ENCODE measurements at regions of chr15 and their contacts with region 1.

Region 1: GRCh38 chr15:67839929-67840748 is at the start of gene RNU6-1:
- DNase-seq: peak; percentile 92 to 94
- H3K4me3 ChIP-seq: peak within 1 kb of the TSS; percentile 81 to 89 (median 86)
- H3K27ac ChIP-seq: peak within 1 kb of the TSS; percentile 92 to 99
- H3K4me1 ChIP-seq: peaks cover 0 to 10% of the 10 kb centered on the region in 2 donors
- H3K27me3 ChIP-seq: peaks cover 2 to 11% of the 10 kb centered on the region in 2 donors
- CTCF ChIP-seq: no peak
- POLR2A ChIP-seq: peak; percentile 85
- total RNA-seq, gene RNU6-1: not detected

Region 2: DNA sequence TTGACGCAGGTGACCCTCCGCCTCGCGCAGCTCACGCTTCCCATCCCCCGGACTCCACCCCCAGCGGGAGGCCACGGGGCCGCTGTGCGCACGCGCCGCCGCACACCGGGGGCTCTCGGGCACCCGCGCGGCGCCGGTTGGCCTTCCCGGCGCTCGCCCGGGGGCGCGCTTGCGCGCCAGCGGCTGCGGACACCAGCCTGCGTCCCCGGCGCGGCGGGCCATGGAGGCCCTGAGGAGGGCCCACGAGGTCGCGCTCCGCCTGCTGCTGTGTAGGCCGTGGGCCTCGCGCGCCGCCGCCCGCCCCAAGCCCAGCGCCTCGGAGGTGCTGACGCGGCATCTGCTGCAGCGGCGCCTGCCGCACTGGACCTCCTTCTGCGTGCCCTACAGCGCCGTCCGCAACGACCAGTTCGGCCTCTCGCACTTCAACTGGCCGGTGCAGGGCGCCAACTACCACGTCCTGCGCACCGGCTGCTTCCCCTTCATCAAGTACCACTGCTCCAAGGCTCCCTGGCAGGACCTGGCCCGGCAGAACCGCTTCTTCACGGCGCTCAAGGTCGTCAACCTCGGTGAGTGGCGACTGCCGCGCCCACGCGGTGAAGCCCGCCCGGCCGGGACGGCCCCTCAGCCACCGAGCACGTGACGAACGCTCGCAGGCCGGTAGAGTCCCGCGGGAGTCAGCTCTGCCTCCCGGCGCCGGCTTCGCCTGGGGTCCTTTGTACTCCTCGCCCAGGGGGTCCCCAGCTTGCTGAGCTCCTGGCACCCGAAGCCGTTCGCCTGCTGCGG is 318.9 kb before region 1 on chr15 and contains the start of gene C15orf61:
- intact Hi-C with region 1: loop called (anchors 10 kb)
- DNase-seq: peak; percentile 90 to 91
- H3K4me3 ChIP-seq: peak within 1 kb of the TSS; percentile 77 to 97 (median 86)
- H3K27ac ChIP-seq: peak within 1 kb of the TSS; percentile 95 to 98
- H3K4me1 ChIP-seq: peaks cover 0 to 10% of the 10 kb centered on the region in 2 donors
- H3K27me3 ChIP-seq: no peaks in the 10 kb centered on the region
- CTCF ChIP-seq: no peak
- POLR2A ChIP-seq: peak; percentile 33
- total RNA-seq, gene C15orf61: 3.8 to 24.3 (median 4.6) TPM

Region 3: DNA sequence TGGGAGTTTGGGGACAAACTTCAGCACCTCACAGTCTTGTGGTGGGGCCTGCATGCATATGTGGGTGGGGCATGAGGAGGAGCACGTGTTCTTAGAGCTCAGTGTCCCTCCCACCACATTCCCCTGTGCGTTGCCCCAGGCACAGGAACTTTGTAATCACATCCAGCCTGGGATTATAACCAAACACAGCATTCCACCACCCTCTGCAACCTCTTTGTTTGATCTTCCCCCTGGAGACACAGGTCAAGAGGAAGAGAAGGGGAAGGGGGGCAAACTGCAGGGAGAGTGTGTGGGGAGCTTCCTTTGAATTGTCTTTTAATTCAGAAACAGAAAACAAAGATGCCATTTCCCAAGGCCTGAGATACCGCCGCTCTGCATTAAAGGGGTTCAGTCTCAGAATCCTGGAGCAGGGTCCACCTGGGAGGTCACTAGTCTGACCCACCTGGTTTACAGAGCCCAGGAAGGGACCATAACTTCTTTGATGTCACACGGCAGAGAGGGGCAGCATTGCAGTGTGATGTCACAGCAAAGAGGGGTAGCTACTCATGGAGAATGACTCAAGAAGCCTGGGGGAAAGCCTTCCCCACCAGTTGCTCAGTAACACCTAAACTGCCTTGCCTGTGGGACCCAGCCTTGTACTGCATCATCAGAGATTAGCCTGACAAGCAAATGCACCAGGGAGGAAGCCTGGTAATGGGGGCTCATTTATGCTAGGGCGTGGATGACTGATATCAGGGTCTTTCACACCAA is 106.0 kb after region 1 on chr15:
- intact Hi-C with region 1: no loop called
- DNase-seq: peak in 1 of 2 donors; percentile 69
- H3K4me3 ChIP-seq: peak overlapping the region in 1 of 3 donors; percentile 20
- H3K27ac ChIP-seq: peak overlapping the region; percentile 30 to 62
- H3K4me1 ChIP-seq: no peaks in the 10 kb centered on the region
- H3K27me3 ChIP-seq: no peaks in the 10 kb centered on the region
- CTCF ChIP-seq: no peak
- POLR2A ChIP-seq: no peak

Measured in breast epithelium (tissue), 4 donors.